ENCODE measurements at regions of chr19 and their contacts with region 1.

Region 1: DNA sequence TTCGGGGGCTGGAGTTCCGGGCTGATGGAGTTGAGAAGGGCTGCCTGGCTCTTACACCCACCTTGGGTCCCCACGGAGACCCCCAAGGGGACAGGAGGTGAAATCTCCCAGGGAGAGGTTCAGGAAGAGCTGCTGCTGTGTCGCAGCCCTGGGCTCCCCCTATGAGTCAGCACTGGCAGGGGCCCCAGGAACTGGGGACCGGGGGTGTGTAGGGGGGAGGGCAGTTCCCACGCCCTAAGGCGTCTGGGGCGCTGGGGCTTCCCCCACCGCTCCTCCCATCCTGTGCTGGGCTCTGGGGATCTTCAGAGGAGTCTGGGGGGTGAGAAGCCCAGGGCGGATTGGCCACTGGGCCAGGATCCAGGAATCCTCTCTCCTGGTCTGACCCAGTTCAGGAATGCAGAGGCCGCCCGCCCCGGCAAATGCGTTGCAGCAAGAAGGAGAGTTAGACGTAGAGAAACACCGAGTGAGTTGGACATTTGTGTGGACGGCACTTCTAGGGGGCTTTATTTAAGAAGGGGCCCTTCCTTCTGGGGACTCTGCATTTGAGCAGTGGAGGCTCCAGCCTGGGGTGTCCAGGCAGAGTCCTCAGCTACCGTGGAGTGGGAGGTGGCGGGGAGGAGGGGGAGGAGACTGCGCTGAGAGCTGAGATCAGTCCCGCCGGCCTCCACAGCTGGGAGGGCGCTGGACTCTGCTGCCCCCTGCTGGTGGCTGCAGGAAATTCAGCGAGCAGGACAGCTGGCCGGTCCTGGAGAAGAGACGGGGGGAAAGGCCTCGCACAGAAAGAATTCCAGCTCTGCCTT is 15.0 kb upstream of the NANOS3 start:
- DNase-seq: peak; percentile 94 to 96 (median 95)
- ATAC-seq: peak; percentile 93 to 95 (median 94)
- H3K4me3 ChIP-seq: peak overlapping the region in 11 of 12 donors; percentile 23 to 64 (median 50)
- H3K27ac ChIP-seq: peak overlapping the region; percentile 81 to 97 (median 94)
- H3K4me1 ChIP-seq: peaks cover 0 to 36% (median 20%) of the 10 kb centered on the region in 12 donors
- H3K27me3 ChIP-seq: peaks cover 0 to 15% (median 0%) of the 10 kb centered on the region in 9 donors
- CTCF ChIP-seq: peak; percentile 95 to 100 (median 98)
- POLR2A ChIP-seq: peak in 1 of 2 donors; percentile 49

Region 2: GRCh38 chr19:13597640-13598039 is 264.3 kb before region 1 on chr19:
- intact Hi-C with region 1: loop called in 8 of 10 experiments (anchors 2 to 10 kb)
- DNase-seq: peak in 4 of 5 donors; percentile 26 to 54 (median 42)
- ATAC-seq: peak; percentile 75 to 83 (median 78)
- H3K4me3 ChIP-seq: no peak overlapping the region
- H3K27ac ChIP-seq: no peak overlapping the region
- H3K4me1 ChIP-seq: no peaks in the 10 kb centered on the region
- H3K27me3 ChIP-seq: peaks cover 0 to 52% (median 0%) of the 10 kb centered on the region in 9 donors
- CTCF ChIP-seq: peak; percentile 34 to 73 (median 64)
- POLR2A ChIP-seq: no peak

Region 3: DNA sequence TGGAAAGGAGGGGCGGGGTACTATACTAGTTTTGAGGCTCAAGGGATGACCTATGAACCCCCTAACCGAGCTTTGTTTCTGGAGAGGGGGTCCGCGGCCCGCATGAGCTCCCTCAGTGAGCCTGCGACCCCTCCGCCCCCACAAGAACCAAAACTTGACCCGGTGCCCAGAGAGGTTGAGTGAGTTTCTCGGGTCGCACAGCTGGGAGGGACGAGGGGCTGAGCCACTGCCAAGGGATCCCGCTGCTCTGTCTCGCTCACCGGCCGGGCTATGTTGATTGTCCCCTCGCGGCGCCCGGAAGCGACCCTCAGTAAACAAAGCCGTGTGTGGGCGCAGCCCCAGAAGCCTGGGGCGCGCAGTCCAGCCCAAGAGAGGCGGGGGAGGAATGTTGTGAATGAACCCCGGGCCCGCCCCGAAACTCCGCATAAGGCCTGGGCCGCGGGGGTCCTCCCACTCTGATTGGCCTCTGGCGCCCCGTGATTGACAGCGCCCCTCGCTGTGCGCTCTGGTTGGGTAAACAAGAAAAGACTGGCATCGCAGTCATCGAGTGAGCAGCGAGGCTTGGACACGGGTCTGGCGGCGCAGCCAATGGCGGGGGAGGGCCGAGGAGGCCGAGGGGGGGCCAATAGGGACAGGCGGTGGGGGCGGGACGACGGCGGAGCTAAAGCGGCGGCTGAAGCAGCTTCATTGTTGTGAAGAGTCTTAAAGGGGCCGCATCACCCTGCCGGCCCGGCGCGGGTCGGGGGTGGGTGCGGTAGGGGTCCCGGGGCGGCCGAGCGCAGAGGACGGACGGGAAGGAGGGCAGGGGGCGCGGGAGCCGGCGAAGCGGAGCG is 67.0 kb before region 1 on chr19 and contains the start of gene ZSWIM4:
- intact Hi-C with region 1: loop called in 2 of 10 experiments (anchors 2 to 5 kb)
- DNase-seq: peak; percentile 99 to 100 (median 100)
- ATAC-seq: peak; percentile 96 to 99 (median 98)
- H3K4me3 ChIP-seq: peak within 1 kb of the TSS; percentile 55 to 92 (median 80)
- H3K27ac ChIP-seq: peak within 1 kb of the TSS; percentile 78 to 95 (median 90)
- H3K4me1 ChIP-seq: peaks cover 0 to 38% (median 21%) of the 10 kb centered on the region in 12 donors
- H3K27me3 ChIP-seq: no peaks in the 10 kb centered on the region
- CTCF ChIP-seq: peak in 1 of 12 donors; percentile 11
- POLR2A ChIP-seq: peak in 1 of 2 donors; percentile 48
- total RNA-seq, gene ZSWIM4: 2.0 to 10.9 (median 3.4) TPM

Region 4: DNA sequence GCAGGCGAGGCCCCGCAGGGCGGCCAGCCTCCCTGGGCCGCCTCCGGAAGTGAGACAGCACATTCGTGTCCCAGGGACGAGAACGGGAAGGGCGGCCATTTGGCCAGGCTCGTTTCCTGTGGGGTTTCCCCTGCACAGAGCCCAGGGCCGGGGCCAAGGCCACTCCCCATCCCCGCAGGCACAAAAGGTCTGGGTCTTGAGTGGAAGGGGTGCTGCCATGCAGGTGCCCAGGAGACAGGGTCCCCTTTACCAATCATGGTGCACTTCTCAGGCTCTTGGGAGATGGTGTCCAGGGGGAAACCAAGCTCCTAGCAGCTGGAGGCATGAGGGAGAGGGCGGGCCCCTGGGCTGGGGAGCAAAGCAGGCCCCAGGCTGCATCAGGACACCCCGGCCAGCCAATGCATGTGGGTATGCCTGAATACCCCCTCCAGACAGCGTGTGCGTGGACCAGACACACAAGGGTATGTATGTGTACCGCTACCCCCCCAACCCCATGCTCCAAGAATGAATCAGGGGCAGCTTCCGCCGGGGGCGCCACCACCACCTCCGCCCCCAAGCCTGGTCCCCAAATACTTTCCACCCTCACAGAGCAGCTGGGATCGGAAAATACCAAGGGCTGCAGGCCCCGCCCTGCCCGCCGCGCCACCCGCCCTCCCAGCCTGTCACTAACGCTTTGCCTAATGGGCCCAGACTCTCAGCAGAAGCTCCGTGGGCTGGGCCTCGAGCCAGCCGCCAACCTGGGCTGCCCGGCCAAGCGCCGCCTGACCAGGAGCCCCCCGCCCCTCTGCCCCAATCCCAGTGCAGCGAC is 22.6 kb before region 1 on chr19:
- intact Hi-C with region 1: loop called in 3 of 10 experiments (anchors 1 to 2 kb)
- DNase-seq: peak; percentile 93 to 97 (median 96)
- ATAC-seq: peak; percentile 58 to 77 (median 72)
- H3K4me3 ChIP-seq: peak overlapping the region; percentile 72 to 99 (median 96)
- H3K27ac ChIP-seq: peak overlapping the region; percentile 99 to 100 (median 100)
- H3K4me1 ChIP-seq: peaks cover 27 to 75% (median 56%) of the 10 kb centered on the region in 12 donors
- H3K27me3 ChIP-seq: no peaks in the 10 kb centered on the region
- CTCF ChIP-seq: peak in 3 of 12 donors; percentile 8 to 16 (median 8)
- POLR2A ChIP-seq: peak; percentile 32 to 42

Region 5: GRCh38 chr19:13905938-13906904 is 44.3 kb after region 1 on chr19 and contains the starts of genes BRME1 and CC2D1A:
- intact Hi-C with region 1: no loop called
- DNase-seq: peak; percentile 93 to 97 (median 95)
- ATAC-seq: peak; percentile 96 to 100 (median 99)
- H3K4me3 ChIP-seq: peak within 1 kb of the TSS; percentile 63 to 98 (median 83)
- H3K27ac ChIP-seq: peak within 1 kb of the TSS in 11 of 12 donors; percentile 17 to 83 (median 67)
- H3K4me1 ChIP-seq: peaks cover 0 to 19% (median 14%) of the 10 kb centered on the region in 12 donors
- H3K27me3 ChIP-seq: no peaks in the 10 kb centered on the region
- CTCF ChIP-seq: peak in 1 of 12 donors; percentile 5
- POLR2A ChIP-seq: peak in 1 of 2 donors; percentile 67
- total RNA-seq, gene BRME1: 0.23 to 1.2 (median 0.70) TPM in 7 of 9 donors, not detected in the others
- total RNA-seq, gene CC2D1A: 14.4 to 36.3 (median 19.2) TPM